ENCODE measurements at regions of chr2 and their contacts with region 1.

Region 1: GRCh38 chr2:177148477-177149154 is 64.0 kb upstream of the HNRNPA3 start:
- DNase-seq: peak; percentile 87
- ATAC-seq: peak; percentile 96
- H3K4me3 Mint-ChIP-seq: peak overlapping the region; percentile 81
- H3K27ac Mint-ChIP-seq: peak overlapping the region; percentile 28
- H3K4me1 Mint-ChIP-seq: peaks cover 14% of the 10 kb centered on the region
- H3K27me3 Mint-ChIP-seq: peaks cover 32% of the 10 kb centered on the region

Region 2: GRCh38 chr2:176140513-176141317 is 1007.9 kb before region 1 on chr2:
- CTCF ChIA-PET with region 1: interaction called, 6 read pairs
- POLR2A ChIA-PET with region 1: no interaction called
- intact Hi-C with region 1: loop called in 1 of 2 experiments (anchors 5 kb)
- DNase-seq: peak; percentile 85
- ATAC-seq: peak; percentile 93
- H3K4me3 Mint-ChIP-seq: no peak overlapping the region
- H3K27ac Mint-ChIP-seq: no peak overlapping the region
- H3K4me1 Mint-ChIP-seq: peaks cover 17% of the 10 kb centered on the region
- H3K27me3 Mint-ChIP-seq: peaks cover 77% of the 10 kb centered on the region

Region 3: DNA sequence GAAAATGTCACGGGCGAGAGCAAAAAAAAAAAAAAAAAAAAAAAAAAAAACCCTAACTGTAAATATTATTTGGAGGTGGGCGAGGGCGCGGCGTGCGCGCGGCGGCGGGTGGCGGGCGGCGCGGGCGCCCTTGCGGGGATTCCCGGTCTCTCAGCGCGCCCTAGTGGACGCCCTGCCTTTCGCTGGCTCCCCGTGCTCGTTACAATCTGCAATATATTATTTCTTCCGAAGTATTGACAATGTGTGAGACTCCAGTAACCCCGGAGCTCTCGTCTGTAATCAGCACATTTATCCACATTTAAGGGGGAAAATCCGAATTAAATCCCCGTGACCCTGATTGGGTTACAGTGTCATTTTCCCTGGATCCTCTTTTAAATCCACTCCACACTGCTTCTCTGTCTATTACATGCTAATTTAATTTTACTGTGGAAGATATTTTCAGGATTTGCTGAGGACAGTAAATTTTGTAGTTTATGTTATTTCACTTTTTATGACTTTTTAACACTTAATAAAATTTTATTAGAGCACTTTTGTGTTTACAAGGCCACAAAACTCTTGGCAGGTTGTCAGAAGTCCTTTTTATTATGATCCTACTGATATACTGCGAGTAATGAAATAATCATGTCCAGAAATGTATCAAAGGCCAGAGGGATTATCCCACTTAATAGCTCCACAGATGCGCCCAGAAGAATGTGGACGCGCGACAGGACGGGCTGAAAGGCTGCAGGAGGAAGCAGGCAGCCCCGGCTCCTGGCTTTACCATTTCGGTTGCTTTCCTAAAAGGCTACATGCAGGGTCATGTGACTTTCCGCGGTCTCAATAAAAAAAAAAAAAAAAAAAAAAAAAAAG is 510.2 kb before region 1 on chr2:
- CTCF ChIA-PET with region 1: no interaction called
- POLR2A ChIA-PET with region 1: no interaction called
- intact Hi-C with region 1: loop called (anchors 5 kb)
- DNase-seq: peak; percentile 80
- ATAC-seq: peak; percentile 86
- H3K4me3 Mint-ChIP-seq: peak overlapping the region; percentile 55
- H3K27ac Mint-ChIP-seq: no peak overlapping the region
- H3K4me1 Mint-ChIP-seq: peaks cover 5% of the 10 kb centered on the region
- H3K27me3 Mint-ChIP-seq: peaks cover 44% of the 10 kb centered on the region

Region 4: GRCh38 chr2:176814306-176815052 is 334.1 kb before region 1 on chr2:
- CTCF ChIA-PET with region 1: interaction called, 14 read pairs
- POLR2A ChIA-PET with region 1: no interaction called
- intact Hi-C with region 1: loop called (anchors 2 to 5 kb)
- DNase-seq: peak; percentile 9
- ATAC-seq: peak; percentile 43
- H3K4me3 Mint-ChIP-seq: no peak overlapping the region
- H3K27ac Mint-ChIP-seq: no peak overlapping the region
- H3K4me1 Mint-ChIP-seq: peaks cover 14% of the 10 kb centered on the region
- H3K27me3 Mint-ChIP-seq: no peaks in the 10 kb centered on the region

Region 5: GRCh38 chr2:177026253-177026652 is 122.4 kb before region 1 on chr2:
- CTCF ChIA-PET with region 1: interaction called, 10 read pairs
- POLR2A ChIA-PET with region 1: no interaction called
- intact Hi-C with region 1: no loop called
- DNase-seq: no peak
- ATAC-seq: peak; percentile 66
- H3K4me3 Mint-ChIP-seq: no peak overlapping the region
- H3K27ac Mint-ChIP-seq: no peak overlapping the region
- H3K4me1 Mint-ChIP-seq: no peaks in the 10 kb centered on the region
- H3K27me3 Mint-ChIP-seq: peaks cover 2% of the 10 kb centered on the region

Measured in activated CD4-positive, alpha-beta T cell treated with anti-CD3 and anti-CD28 coated beads for 36 hours (primary cell).